Endothelial cell of umbilical vein (primary cell): ENCODE measurements at regions of chr12 and their contacts with region 1.

Region 1: DNA sequence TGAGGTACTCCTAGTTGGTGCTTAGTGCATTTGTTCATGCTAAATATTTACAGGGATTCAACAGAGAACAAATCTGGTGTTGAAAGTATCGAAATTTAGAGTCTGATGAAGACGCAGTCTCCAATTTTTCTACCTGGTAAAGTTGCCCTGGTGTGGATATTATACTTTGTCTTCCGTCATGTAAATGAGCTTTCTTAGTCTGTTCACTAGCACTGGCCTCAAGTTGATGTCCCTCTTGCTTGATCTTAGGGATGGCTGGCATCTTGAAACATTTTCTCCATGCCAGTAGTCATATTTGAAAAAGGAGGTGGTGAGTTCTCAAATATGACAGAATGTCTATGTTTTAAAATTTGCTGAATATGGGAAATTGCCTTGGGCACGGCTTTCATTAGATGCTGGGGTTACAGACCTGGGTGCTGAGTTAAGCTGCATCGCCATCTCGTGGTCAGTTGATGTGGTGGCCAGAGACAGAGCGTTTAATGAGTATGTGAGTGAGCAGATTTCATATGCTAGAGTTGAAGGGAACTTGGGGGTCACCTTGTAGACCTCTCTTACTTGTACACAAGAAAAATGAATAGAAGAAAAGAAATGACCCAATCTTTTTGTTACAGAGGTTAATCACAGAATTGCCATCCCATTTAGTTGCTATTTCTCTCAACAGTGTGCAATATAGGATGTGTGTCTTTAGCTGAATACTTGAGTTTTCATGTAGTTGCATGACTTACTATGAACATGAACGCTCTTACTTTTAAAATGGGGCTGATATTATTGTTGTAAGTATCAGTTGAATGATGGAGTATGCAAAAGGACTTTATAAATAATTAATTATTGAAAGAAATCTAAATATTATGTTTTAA is 172.8 kb upstream of the DCN start:
- DNase-seq: peak; percentile 75
- H3K4me3 ChIP-seq: no peak overlapping the region
- H3K27ac ChIP-seq: no peak overlapping the region
- H3K4me1 ChIP-seq: peaks cover 4% of the 10 kb centered on the region
- H3K27me3 ChIP-seq: no peaks in the 10 kb centered on the region
- CTCF ChIP-seq: peak; percentile 83 to 87
- POLR2A ChIP-seq: no peak

Region 2: DNA sequence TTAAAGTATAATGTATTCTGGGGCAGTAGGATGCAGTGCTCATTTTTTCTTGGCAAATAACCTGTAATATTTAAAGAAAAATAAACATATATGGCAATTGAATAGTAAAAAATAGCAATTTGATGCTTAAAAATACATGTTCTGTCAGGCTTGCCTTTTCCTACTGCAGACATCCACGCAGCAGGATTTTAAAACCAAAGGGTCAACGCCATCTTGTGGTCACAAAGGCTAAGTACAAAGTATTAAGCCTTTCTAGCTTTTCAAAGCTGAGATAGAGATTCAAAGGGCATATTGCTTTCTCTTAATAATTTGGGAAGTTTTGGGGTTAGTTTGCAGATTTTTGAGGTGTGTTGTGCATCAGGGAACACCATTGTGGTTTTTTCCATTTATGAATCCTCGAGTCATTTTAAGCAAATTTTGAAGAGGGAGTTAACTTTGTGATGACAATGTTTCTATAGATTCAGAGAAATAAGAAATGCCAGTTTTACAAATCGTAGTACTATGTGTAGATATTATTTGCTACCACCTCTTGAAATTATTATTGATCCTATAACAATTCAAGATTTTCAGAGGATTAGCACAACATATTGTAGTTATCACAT is 395.7 kb before region 1 on chr12:
- CTCF ChIA-PET with region 1: interaction called, 40 read pairs
- POLR2A ChIA-PET with region 1: no interaction called
- dilution Hi-C with region 1: no loop called
- intact Hi-C with region 1: no loop called
- DNase-seq: peak; percentile 54
- H3K4me3 ChIP-seq: no peak overlapping the region
- H3K27ac ChIP-seq: no peak overlapping the region
- H3K4me1 ChIP-seq: no peaks in the 10 kb centered on the region
- H3K27me3 ChIP-seq: no peaks in the 10 kb centered on the region
- CTCF ChIP-seq: peak; percentile 57 to 74
- POLR2A ChIP-seq: no peak

Region 3: GRCh38 chr12:90978117-90978770 is 377.1 kb before region 1 on chr12:
- CTCF ChIA-PET with region 1: interaction called, 56 read pairs
- POLR2A ChIA-PET with region 1: no interaction called
- dilution Hi-C with region 1: no loop called
- intact Hi-C with region 1: loop called (anchors 1 kb)
- DNase-seq: peak; percentile 70
- H3K4me3 ChIP-seq: no peak overlapping the region
- H3K27ac ChIP-seq: no peak overlapping the region
- H3K4me1 ChIP-seq: no peaks in the 10 kb centered on the region
- H3K27me3 ChIP-seq: no peaks in the 10 kb centered on the region
- CTCF ChIP-seq: peak; percentile 37 to 49
- POLR2A ChIP-seq: no peak

Region 4: GRCh38 chr12:91109148-91109564 is 246.2 kb before region 1 on chr12:
- CTCF ChIA-PET with region 1: interaction called, 17 read pairs
- POLR2A ChIA-PET with region 1: no interaction called
- dilution Hi-C with region 1: no loop called
- intact Hi-C with region 1: loop called (anchors 1 kb)
- DNase-seq: peak; percentile 74
- H3K4me3 ChIP-seq: no peak overlapping the region
- H3K27ac ChIP-seq: no peak overlapping the region
- H3K4me1 ChIP-seq: peaks cover 2% of the 10 kb centered on the region
- H3K27me3 ChIP-seq: no peaks in the 10 kb centered on the region
- CTCF ChIP-seq: peak; percentile 67 to 69
- POLR2A ChIP-seq: no peak

Region 5: DNA sequence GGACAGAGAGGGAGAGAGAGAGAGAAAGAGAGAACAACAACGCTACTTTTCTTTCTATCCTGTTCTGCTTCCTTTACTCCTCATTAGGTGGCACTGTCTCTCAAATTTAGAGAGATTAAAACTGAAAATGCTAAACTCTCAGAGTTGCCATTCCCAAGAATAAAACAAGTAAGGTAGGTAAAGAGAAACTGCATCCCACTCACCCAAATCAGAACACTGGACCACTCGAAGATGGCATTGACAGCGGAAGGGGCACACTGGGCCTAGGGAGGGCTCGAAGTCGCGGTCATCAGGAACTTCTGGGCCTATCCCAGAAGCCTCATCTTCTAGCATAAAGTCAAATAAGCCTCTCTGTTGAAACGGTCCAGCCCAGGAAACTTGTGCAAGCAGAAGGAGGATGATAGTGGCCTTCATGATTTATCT is 177.2 kb before region 1 on chr12:
- CTCF ChIA-PET with region 1: interaction called, 11 read pairs
- POLR2A ChIA-PET with region 1: no interaction called
- dilution Hi-C with region 1: no loop called
- intact Hi-C with region 1: loop called (anchors 2 kb)
- DNase-seq: peak; percentile 51
- H3K4me3 ChIP-seq: no peak overlapping the region
- H3K27ac ChIP-seq: no peak overlapping the region
- H3K4me1 ChIP-seq: peaks cover 10% of the 10 kb centered on the region
- H3K27me3 ChIP-seq: no peaks in the 10 kb centered on the region
- CTCF ChIP-seq: peak; percentile 25 to 32
- POLR2A ChIP-seq: no peak

Region 6: DNA sequence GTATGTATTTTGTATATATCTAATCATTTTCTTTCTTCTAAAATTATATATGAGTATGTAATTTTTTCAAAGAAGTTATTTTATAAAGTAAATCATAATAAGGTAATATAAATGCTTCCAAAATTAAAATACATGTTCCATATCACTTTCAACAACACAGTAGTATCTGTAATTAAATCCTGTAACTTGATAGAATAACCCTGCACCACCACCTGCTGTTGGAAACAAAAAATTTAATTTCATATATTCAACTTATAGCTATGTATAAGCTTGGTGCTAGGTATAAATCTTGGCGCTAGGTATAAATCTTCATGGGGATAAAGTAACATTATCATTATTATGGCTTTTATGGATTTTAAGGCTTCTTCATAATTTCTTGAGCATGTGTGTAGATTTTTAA is 23.1 kb before region 1 on chr12:
- CTCF ChIA-PET with region 1: interaction called, 31 read pairs
- POLR2A ChIA-PET with region 1: no interaction called
- dilution Hi-C with region 1: no loop called
- intact Hi-C with region 1: no loop called
- DNase-seq: no peak
- H3K4me3 ChIP-seq: no peak overlapping the region
- H3K27ac ChIP-seq: no peak overlapping the region
- H3K4me1 ChIP-seq: no peaks in the 10 kb centered on the region
- H3K27me3 ChIP-seq: no peaks in the 10 kb centered on the region
- CTCF ChIP-seq: no peak
- POLR2A ChIP-seq: no peak

Region 7: GRCh38 chr12:91367234-91367849 is 12.0 kb after region 1 on chr12:
- CTCF ChIA-PET with region 1: interaction called, 15 read pairs
- POLR2A ChIA-PET with region 1: no interaction called
- dilution Hi-C with region 1: no loop called
- intact Hi-C with region 1: no loop called
- DNase-seq: peak; percentile 24
- H3K4me3 ChIP-seq: no peak overlapping the region
- H3K27ac ChIP-seq: no peak overlapping the region
- H3K4me1 ChIP-seq: peaks cover 15% of the 10 kb centered on the region
- H3K27me3 ChIP-seq: no peaks in the 10 kb centered on the region
- CTCF ChIP-seq: peak; percentile 20 to 36
- POLR2A ChIP-seq: no peak

Region 8: GRCh38 chr12:91400271-91400670 is 44.9 kb after region 1 on chr12:
- CTCF ChIA-PET with region 1: no interaction called
- POLR2A ChIA-PET with region 1: no interaction called
- dilution Hi-C with region 1: no loop called
- intact Hi-C with region 1: no loop called
- DNase-seq: peak; percentile 93
- H3K4me3 ChIP-seq: no peak overlapping the region
- H3K27ac ChIP-seq: peak overlapping the region; percentile 48
- H3K4me1 ChIP-seq: peaks cover 22% of the 10 kb centered on the region
- H3K27me3 ChIP-seq: no peaks in the 10 kb centered on the region
- CTCF ChIP-seq: no peak
- POLR2A ChIP-seq: no peak

Region 9: GRCh38 chr12:91413581-91414546 is 58.5 kb after region 1 on chr12:
- CTCF ChIA-PET with region 1: no interaction called
- POLR2A ChIA-PET with region 1: no interaction called
- dilution Hi-C with region 1: no loop called
- intact Hi-C with region 1: no loop called
- DNase-seq: no peak
- H3K4me3 ChIP-seq: no peak overlapping the region
- H3K27ac ChIP-seq: no peak overlapping the region
- H3K4me1 ChIP-seq: no peaks in the 10 kb centered on the region
- H3K27me3 ChIP-seq: no peaks in the 10 kb centered on the region
- CTCF ChIP-seq: no peak
- POLR2A ChIP-seq: no peak

Region 10: GRCh38 chr12:92007787-92008186 is 652.4 kb after region 1 on chr12:
- CTCF ChIA-PET with region 1: no interaction called
- POLR2A ChIA-PET with region 1: no interaction called
- dilution Hi-C with region 1: no loop called
- intact Hi-C with region 1: no loop called
- DNase-seq: no peak
- H3K4me3 ChIP-seq: no peak overlapping the region
- H3K27ac ChIP-seq: no peak overlapping the region
- H3K4me1 ChIP-seq: no peaks in the 10 kb centered on the region
- H3K27me3 ChIP-seq: no peaks in the 10 kb centered on the region
- CTCF ChIP-seq: no peak
- POLR2A ChIP-seq: no peak